ENCODE measurements at regions of chr6 and their contacts with region 1.

Region 1: GRCh38 chr6:7900621-7901020 is 10.0 kb downstream of the TXNDC5 start:
- DNase-seq: no peak
- ATAC-seq: no peak
- H3K4me3 ChIP-seq: no peak overlapping the region
- H3K27ac ChIP-seq: peak overlapping the region in 1 of 4 donors; percentile 60
- H3K4me1 ChIP-seq: peaks cover 31 to 36% of the 10 kb centered on the region in 2 donors
- H3K27me3 ChIP-seq: no peaks in the 10 kb centered on the region
- CTCF ChIP-seq: no peak
- POLR2A ChIP-seq: no peak

Region 2: GRCh38 chr6:7725849-7726415 is 174.7 kb before region 1 on chr6 and contains the start of gene BMP6:
- in situ Hi-C with region 1: no loop called
- intact Hi-C with region 1: no loop called
- DNase-seq: peak; percentile 69 to 70
- ATAC-seq: peak; percentile 87 to 89
- H3K4me3 ChIP-seq: peak within 1 kb of the TSS; percentile 57 to 84 (median 68)
- H3K27ac ChIP-seq: no peak within 1 kb of the TSS
- H3K4me1 ChIP-seq: peaks cover 12 to 21% of the 10 kb centered on the region in 2 donors
- H3K27me3 ChIP-seq: peaks cover 34 to 43% (median 36%) of the 10 kb centered on the region in 3 donors
- CTCF ChIP-seq: peak in 1 of 5 experiments; percentile 8
- POLR2A ChIP-seq: peak; percentile 42 to 64
- total RNA-seq, gene BMP6: 1.7 to 8.3 (median 3.3) TPM

Region 3: GRCh38 chr6:7960848-7961247 is 60.2 kb after region 1 on chr6:
- in situ Hi-C with region 1: no loop called
- intact Hi-C with region 1: no loop called
- DNase-seq: no peak
- ATAC-seq: no peak
- H3K4me3 ChIP-seq: no peak overlapping the region
- H3K27ac ChIP-seq: no peak overlapping the region
- H3K4me1 ChIP-seq: no peaks in the 10 kb centered on the region
- H3K27me3 ChIP-seq: no peaks in the 10 kb centered on the region
- CTCF ChIP-seq: no peak
- POLR2A ChIP-seq: no peak

Region 4: DNA sequence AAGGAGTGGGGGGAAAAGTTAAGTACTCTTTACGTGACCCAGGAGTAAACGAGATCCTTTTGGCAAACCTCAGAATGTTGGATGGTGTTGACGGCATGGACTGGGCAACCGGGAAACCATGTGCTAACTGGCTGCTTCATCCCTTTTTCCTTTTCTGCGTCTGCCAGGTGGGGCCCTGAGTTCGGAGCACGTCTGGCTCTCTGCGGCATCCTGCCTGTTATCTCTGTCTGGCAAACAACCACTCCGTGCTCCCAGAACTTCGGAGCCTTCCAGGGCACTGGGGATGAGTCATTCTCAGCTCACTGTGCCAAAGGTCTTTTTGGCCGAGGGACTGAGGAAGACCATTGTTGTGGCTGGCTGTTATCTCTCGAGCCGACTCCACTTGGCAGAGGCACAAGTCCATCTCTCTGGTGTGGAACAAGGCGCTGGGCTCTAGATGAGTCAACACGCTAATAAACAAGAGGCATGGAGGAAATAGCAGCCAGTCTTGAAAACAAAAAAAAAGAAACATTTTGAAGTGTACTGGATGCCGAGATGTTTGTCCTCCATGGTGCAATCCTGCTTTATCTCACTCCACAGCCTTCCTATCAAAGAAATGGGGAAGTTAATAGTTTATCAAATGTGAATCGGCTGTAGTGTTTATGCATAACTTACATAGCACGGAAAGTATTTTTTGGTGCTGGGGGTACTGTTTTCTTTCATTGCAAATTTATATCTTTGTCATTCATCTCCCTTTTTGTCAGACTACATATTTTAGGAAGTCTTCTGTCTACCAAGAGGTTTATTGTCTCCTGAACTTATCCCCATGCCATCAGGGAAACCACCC is 74.5 kb after region 1 on chr6:
- in situ Hi-C with region 1: no loop called
- intact Hi-C with region 1: loop called (anchors 2 kb)
- DNase-seq: peak; percentile 74 to 80
- ATAC-seq: peak; percentile 91 to 98
- H3K4me3 ChIP-seq: peak overlapping the region in 3 of 4 donors; percentile 7 to 29 (median 26)
- H3K27ac ChIP-seq: peak overlapping the region; percentile 11 to 64 (median 49)
- H3K4me1 ChIP-seq: peaks cover 11 to 17% of the 10 kb centered on the region in 2 donors
- H3K27me3 ChIP-seq: no peaks in the 10 kb centered on the region
- CTCF ChIP-seq: no peak
- POLR2A ChIP-seq: no peak